RWPE1 (cell line): ENCODE measurements at regions of chr4 and their contacts with region 1.

Region 1: DNA sequence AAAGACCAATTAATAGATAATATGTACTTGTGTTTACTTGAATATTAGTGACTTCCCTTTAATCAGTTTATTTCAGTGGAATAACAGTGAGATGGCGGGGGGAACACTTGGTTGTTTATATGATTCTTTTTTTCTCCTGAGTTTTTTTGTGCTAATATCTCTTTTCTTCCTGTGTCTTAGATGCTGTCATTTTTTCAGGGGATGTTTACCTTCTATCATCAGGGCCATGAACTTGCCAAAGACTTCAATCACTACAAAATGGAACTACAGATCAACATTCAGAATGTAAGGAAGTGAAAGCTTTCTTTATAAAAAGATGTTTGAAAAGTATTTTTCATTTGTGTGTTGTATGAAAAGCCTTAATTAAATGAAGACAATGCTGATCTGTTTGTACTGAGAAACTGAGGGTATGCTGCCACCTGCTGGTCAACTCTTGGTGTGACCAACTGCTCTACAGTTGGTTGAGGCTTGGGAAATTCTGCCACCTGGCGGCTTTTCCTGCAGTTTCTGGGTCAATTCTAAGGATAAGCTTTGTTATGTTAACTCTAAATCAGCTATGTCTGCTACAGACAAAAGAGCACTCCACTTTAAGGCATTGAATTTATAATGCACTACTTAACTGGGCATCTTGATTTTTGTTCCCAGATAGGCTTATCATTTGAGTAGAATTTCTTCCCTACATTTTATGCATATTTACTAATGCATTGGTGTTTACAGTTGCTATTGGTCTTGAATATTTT is 134.8 kb downstream of the ARHGAP10 start:
- DNase-seq: peak; percentile 74
- H3K27ac ChIP-seq: no peak overlapping the region
- CTCF ChIP-seq: peak; percentile 97

Region 2: GRCh38 chr4:147707865-147708672 is 158.6 kb before region 1 on chr4:
- CTCF ChIA-PET with region 1: interaction called, 33 read pairs
- POLR2A ChIA-PET with region 1: no interaction called
- DNase-seq: peak; percentile 36
- H3K27ac ChIP-seq: no peak overlapping the region
- CTCF ChIP-seq: peak; percentile 90

Region 3: DNA sequence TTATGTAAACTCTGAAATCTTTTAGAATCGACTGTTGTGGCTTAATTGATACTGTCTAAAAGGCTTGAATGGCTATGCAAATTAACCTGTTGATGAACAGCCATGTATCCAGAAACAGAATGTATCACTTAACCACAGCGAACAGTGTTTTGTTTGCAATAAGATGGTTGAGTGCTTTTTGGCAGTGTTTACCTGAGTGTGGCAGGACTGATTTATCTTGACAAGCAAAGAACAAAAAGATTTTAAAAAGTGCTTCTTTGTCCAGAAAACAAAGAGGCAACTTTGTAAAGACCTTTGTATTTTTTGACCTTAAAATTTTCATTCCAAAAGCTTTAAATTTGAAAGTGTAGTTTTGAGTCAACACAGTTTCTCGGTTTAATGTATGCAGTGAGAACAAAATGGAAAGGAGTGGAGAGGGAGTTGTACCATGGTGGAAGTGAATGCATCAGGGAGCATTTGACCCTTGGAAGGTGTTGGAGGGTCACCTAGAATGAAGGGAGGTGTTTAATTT is 116.8 kb before region 1 on chr4:
- CTCF ChIA-PET with region 1: no interaction called
- POLR2A ChIA-PET with region 1: no interaction called
- DNase-seq: no peak
- H3K27ac ChIP-seq: no peak overlapping the region
- CTCF ChIP-seq: no peak